Cardiac septum (tissue), 1 donor: ENCODE measurements at regions of chr22 and their contacts with region 1.

Region 1: GRCh38 chr22:17501679-17502285 is 61.5 kb upstream of the SLC25A18 start:
- DNase-seq: no peak

Region 2: GRCh38 chr22:16585876-16586569 is 915.8 kb before region 1 on chr22:
- intact Hi-C with region 1: no loop called
- DNase-seq: no peak

Region 3: GRCh38 chr22:17077255-17077654 is 424.5 kb before region 1 on chr22:
- intact Hi-C with region 1: loop called (anchors 5 kb)
- DNase-seq: no peak

Region 4: GRCh38 chr22:17753401-17753989 is 251.7 kb after region 1 on chr22:
- intact Hi-C with region 1: no loop called
- DNase-seq: no peak